ENCODE measurements at regions of chr5 and their contacts with region 1.

Region 1: DNA sequence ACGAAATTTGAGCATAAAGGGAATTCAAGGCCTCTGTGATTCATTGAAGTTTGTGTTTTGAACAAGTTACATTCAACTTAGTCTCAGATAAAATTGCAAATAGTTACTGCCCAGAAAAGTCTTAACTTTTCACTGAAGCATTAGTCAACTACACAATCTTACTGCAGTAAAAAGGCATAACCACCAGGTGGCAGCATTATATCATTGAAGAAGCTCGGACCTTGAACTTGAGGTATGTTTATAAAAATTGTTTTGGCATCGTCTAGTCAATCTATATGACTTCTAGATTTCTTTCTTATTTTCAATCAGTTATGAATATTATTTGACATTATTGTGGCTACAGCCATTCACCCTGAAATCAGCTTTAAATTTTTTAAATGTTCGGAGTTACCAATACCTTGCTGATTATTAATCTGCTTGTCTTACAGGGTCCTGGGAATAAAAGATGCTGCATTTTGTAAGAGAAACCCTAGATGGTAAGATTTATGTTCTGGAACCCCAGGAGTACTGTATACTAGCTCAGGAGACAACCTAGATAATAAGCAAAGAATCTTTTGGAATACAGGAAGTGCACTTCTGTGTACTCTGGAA is 83.9 kb upstream of the GRAMD2B start:
- DNase-seq: no peak
- ATAC-seq: no peak
- H3K4me3 Mint-ChIP-seq: no peak overlapping the region
- H3K27ac Mint-ChIP-seq: no peak overlapping the region
- H3K4me1 Mint-ChIP-seq: no peaks in the 10 kb centered on the region
- H3K27me3 Mint-ChIP-seq: peaks cover 21% of the 10 kb centered on the region
- CTCF ChIP-seq: peak; percentile 40

Region 2: GRCh38 chr5:125257057-125257972 is 1082.0 kb before region 1 on chr5:
- CTCF ChIA-PET with region 1: no interaction called
- POLR2A ChIA-PET with region 1: no interaction called
- intact Hi-C with region 1: no loop called
- DNase-seq: no peak
- ATAC-seq: no peak
- H3K4me3 Mint-ChIP-seq: no peak overlapping the region
- H3K27ac Mint-ChIP-seq: no peak overlapping the region
- H3K4me1 Mint-ChIP-seq: peaks cover 2% of the 10 kb centered on the region
- H3K27me3 Mint-ChIP-seq: no peaks in the 10 kb centered on the region
- CTCF ChIP-seq: no peak

Region 3: GRCh38 chr5:126319414-126319813 is 19.9 kb before region 1 on chr5:
- CTCF ChIA-PET with region 1: no interaction called
- POLR2A ChIA-PET with region 1: no interaction called
- intact Hi-C with region 1: no loop called
- DNase-seq: no peak
- ATAC-seq: no peak
- H3K4me3 Mint-ChIP-seq: no peak overlapping the region
- H3K27ac Mint-ChIP-seq: no peak overlapping the region
- H3K4me1 Mint-ChIP-seq: no peaks in the 10 kb centered on the region
- H3K27me3 Mint-ChIP-seq: peaks cover 11% of the 10 kb centered on the region
- CTCF ChIP-seq: no peak

Region 4: GRCh38 chr5:126354012-126354857 is 14.9 kb after region 1 on chr5:
- CTCF ChIA-PET with region 1: interaction called, 20 read pairs
- POLR2A ChIA-PET with region 1: no interaction called
- intact Hi-C with region 1: no loop called
- DNase-seq: no peak
- ATAC-seq: peak; percentile 42
- H3K4me3 Mint-ChIP-seq: no peak overlapping the region
- H3K27ac Mint-ChIP-seq: no peak overlapping the region
- H3K4me1 Mint-ChIP-seq: peaks cover 4% of the 10 kb centered on the region
- H3K27me3 Mint-ChIP-seq: peaks cover 21% of the 10 kb centered on the region
- CTCF ChIP-seq: no peak

Region 5: DNA sequence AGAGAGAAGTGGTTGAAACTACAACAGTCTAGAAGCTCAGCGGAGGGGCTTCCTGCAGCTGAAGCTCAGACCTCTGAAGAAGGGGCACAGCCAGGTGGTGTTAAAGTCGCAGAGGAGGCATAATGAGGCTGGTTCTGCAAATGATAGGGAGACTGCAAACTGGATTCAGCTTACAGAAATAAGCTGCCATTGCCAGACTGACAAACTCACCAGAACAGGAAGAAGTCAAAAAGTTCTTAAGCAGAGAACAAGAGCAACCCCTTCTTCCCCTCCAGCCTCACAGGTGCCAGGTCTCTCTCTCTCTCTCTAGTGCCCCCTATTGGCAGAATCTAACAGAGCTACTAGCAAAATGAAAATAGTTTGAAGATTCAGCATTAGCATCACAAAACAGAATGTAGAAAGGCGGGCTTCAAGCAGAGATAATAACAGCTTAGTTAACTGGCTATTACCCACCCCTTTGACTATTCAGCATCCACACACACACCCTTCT is 160.6 kb after region 1 on chr5:
- CTCF ChIA-PET with region 1: interaction called, 19 read pairs
- POLR2A ChIA-PET with region 1: no interaction called
- intact Hi-C with region 1: loop called (anchors 1 kb)
- DNase-seq: no peak
- ATAC-seq: no peak
- H3K4me3 Mint-ChIP-seq: no peak overlapping the region
- H3K27ac Mint-ChIP-seq: no peak overlapping the region
- H3K4me1 Mint-ChIP-seq: no peaks in the 10 kb centered on the region
- H3K27me3 Mint-ChIP-seq: peaks cover 2% of the 10 kb centered on the region
- CTCF ChIP-seq: no peak

Region 6: DNA sequence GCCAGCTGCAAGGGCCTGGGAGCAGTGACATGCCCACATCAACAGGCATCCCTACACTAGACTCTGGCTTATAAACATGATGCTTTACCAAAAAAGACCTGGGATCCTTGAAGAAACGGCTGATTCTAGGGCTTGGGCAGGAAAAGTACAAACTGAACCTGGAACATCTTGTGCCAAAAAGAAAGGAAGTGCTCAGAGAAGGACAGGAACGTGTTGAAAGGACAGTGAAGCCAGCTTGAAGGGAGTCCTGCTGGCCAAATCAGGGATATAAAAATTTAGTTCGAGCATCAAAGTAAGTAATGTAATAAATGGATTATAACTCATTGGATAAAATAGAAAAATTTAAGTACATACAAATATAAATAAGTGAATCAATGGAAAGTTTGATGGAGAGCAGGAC is 197.6 kb after region 1 on chr5:
- CTCF ChIA-PET with region 1: interaction called, 30 read pairs
- POLR2A ChIA-PET with region 1: no interaction called
- intact Hi-C with region 1: loop called (anchors 1 kb)
- DNase-seq: no peak
- ATAC-seq: no peak
- H3K4me3 Mint-ChIP-seq: no peak overlapping the region
- H3K27ac Mint-ChIP-seq: no peak overlapping the region
- H3K4me1 Mint-ChIP-seq: no peaks in the 10 kb centered on the region
- H3K27me3 Mint-ChIP-seq: peaks cover 1% of the 10 kb centered on the region
- CTCF ChIP-seq: no peak

Region 7: DNA sequence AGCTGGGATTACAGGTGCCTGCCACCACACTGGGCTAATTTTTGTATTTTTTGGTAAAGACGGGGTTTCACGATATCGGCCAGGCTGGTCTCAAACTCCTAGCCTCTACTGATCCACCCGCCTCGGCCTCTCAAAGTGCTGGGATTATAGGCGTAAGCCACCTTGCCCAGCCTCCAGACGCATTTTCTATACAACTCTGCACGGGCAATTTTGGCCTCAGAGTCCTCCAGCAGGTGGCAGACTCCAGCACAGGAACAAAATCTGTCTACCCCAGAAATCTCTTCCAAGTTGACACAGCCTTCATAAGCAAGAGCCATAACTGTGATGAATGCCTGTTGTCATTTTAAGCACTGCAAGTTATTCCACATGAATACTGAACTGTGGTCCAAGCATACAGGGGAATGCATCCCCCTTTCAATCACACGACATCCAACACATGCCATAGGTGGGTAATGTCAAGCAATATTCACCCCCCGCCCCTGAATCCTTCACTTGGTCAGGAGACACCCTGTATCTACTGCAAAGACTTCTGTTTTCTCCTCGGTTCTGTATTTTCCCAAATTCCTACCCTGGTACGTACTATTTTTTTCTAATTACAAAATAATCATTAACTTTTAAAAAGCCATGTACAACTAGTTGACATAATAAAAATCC is 204.9 kb after region 1 on chr5:
- CTCF ChIA-PET with region 1: interaction called, 30 read pairs
- POLR2A ChIA-PET with region 1: no interaction called
- intact Hi-C with region 1: loop called (anchors 1 kb)
- DNase-seq: no peak
- ATAC-seq: no peak
- H3K4me3 Mint-ChIP-seq: no peak overlapping the region
- H3K27ac Mint-ChIP-seq: no peak overlapping the region
- H3K4me1 Mint-ChIP-seq: no peaks in the 10 kb centered on the region
- H3K27me3 Mint-ChIP-seq: no peaks in the 10 kb centered on the region
- CTCF ChIP-seq: peak; percentile 45

Region 8: GRCh38 chr5:126801992-126802294 is 462.6 kb after region 1 on chr5:
- CTCF ChIA-PET with region 1: no interaction called
- POLR2A ChIA-PET with region 1: no interaction called
- intact Hi-C with region 1: loop called (anchors 5 kb)
- DNase-seq: no peak
- ATAC-seq: peak; percentile 28
- H3K4me3 Mint-ChIP-seq: no peak overlapping the region
- H3K27ac Mint-ChIP-seq: no peak overlapping the region
- H3K4me1 Mint-ChIP-seq: peaks cover 37% of the 10 kb centered on the region
- H3K27me3 Mint-ChIP-seq: no peaks in the 10 kb centered on the region
- CTCF ChIP-seq: no peak

Region 9: GRCh38 chr5:127030259-127031146 is 691.2 kb after region 1 on chr5 and contains the start of gene MARCHF3:
- CTCF ChIA-PET with region 1: no interaction called
- POLR2A ChIA-PET with region 1: no interaction called
- intact Hi-C with region 1: no loop called
- DNase-seq: peak; percentile 98
- ATAC-seq: peak; percentile 93
- H3K4me3 Mint-ChIP-seq: peak within 1 kb of the TSS; percentile 94
- H3K27ac Mint-ChIP-seq: peak within 1 kb of the TSS; percentile 90
- H3K4me1 Mint-ChIP-seq: peaks cover 45% of the 10 kb centered on the region
- H3K27me3 Mint-ChIP-seq: no peaks in the 10 kb centered on the region
- CTCF ChIP-seq: no peak
- total RNA-seq, gene MARCHF3: 21.9 and 22.8 TPM in 2 replicates

Measured in activated B cell treated with CpG ODN at 0.5 μM for 24 hours (primary cell).